Sciatic nerve (tissue), 2 donors: ENCODE measurements at regions of chr18 and their contacts with region 1.

Region 1: GRCh38 chr18:11149441-11150270 is at the start of gene PIEZO2:
- DNase-seq: peak; percentile 80
- ATAC-seq: peak; percentile 89
- total RNA-seq, gene PIEZO2: 26.8 TPM

Region 2: DNA sequence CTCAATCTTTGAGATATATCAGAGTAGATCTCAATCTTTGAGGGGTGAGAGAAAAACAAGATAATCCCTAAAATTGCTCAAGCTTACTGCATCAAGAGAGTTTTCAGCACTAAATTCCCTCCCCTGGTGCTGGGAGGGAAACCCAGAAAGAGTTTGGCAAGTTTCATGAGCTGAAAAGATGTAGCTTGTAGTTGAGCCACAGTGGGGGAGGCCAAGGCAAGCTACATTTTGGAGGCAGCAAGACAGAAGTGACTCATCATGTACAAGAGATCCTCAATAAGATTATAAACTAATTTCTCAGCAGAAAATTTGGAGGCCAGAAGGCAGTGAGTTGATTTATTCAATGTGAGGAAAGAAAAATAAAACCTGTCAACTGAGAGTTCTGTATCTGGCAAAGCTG is 308.5 kb before region 1 on chr18:
- intact Hi-C with region 1: loop called (anchors 10 kb)
- DNase-seq: no peak
- ATAC-seq: peak; percentile 83

Region 3: GRCh38 chr18:11040823-11041656 is 108.6 kb before region 1 on chr18:
- intact Hi-C with region 1: loop called (anchors 5 kb)
- DNase-seq: peak; percentile 66
- ATAC-seq: peak; percentile 88

Region 4: GRCh38 chr18:12336875-12337274 is 1187.2 kb after region 1 on chr18:
- intact Hi-C with region 1: no loop called
- DNase-seq: no peak
- ATAC-seq: no peak